Psoas muscle (tissue), 8 donors: ENCODE measurements at regions of chr3 and their contacts with region 1.

Region 1: DNA sequence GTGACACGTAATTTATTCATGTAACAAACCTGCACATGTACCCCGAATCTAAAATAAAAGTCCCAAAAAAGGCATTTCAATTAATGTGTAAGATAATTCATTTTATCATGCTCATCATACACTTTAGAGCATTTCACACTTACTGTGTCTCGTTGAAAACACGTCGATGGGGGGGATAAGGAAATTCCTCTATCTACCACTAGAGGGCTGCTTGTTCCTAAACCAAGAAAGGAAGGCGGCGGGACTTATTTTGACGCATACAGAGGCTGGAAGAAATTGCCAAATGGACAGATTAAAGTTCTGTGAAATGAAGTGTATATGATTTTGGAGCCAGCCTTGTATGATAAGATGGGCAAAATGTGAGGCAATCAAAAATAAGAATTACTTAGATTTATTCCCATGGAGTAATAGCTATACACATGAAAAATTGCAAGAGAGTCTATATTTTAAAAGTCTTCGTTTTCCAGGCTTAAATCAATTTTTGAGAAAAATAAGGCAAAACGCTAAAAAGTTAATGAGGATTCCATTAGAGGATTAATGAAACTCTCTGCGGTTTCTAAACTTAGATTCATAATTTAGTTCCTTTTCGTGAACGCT is 346.8 kb downstream of the CNTN3 start:
- DNase-seq: no peak
- ATAC-seq: no peak
- H3K4me3 ChIP-seq: no peak overlapping the region
- H3K27ac ChIP-seq: no peak overlapping the region
- H3K4me1 ChIP-seq: no peaks in the 10 kb centered on the region
- H3K27me3 ChIP-seq: no peaks in the 10 kb centered on the region
- CTCF ChIP-seq: peak; percentile 60

Region 2: DNA sequence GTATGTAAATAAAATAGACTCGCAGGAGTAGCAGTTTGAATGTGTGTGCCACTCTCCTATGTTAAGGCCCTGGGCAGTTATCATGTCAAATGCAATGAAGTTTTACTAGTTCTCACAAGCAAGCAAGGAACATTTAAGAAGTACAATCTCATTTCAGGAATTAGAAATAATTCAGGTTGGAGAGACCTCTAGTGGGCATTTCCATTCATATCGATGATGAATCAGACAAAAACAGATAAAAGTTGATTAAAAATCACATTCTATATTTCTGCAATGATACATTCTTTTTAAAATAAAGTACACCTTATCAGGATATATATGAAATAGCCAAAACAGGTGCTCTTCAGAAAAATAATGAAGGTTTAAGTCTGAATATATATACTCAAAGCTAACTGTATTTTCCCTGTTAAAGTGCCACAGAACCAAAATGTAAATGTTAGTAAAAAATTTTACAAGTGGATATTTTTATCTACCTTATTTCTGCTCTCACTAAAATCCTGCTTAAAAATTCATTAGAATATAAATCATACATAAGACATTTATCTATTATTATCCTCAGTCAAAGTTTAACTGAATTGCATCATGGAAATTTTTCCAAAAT is 904.0 kb after region 1 on chr3:
- intact Hi-C with region 1: loop called in 1 of 2 experiments (anchors 5 kb)
- DNase-seq: no peak
- ATAC-seq: no peak
- H3K4me3 ChIP-seq: no peak overlapping the region
- H3K27ac ChIP-seq: no peak overlapping the region
- H3K4me1 ChIP-seq: no peaks in the 10 kb centered on the region
- H3K27me3 ChIP-seq: no peaks in the 10 kb centered on the region
- CTCF ChIP-seq: peak; percentile 20